ENCODE measurements at regions of chr1 and their contacts with region 1.

Region 1: GRCh38 chr1:204989266-204990058 is 53.5 kb upstream of the CNTN2 start:
- DNase-seq: peak; percentile 60 to 66
- ATAC-seq: peak; percentile 84 to 90 (median 86)
- H3K4me3 ChIP-seq: no peak overlapping the region
- H3K27ac ChIP-seq: no peak overlapping the region
- H3K4me1 ChIP-seq: peaks cover 0 to 6% (median 4%) of the 10 kb centered on the region in 9 donors
- H3K27me3 ChIP-seq: peaks cover 0 to 7% (median 5%) of the 10 kb centered on the region in 7 donors
- CTCF ChIP-seq: peak; percentile 75 to 95 (median 93)

Region 2: DNA sequence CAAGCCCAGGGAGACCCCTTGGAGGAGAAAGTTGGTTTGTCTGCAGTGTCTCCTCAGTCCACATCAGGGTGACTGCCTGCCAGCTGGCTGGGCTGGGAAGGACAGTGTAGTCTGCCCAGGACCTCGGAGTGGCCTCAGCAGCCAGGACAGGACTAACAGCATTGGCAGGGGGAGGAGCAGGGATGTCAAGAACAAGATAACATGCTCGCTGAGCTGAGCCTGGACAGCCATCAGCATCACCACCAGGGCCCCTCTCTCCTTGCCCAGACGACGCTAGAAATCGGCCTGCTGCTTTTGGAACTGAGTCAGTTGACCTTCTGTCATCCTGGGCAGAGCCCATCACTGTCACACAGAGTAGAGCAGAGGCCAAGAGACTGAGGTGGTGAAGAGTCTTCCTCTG is 30.1 kb before region 1 on chr1:
- intact Hi-C with region 1: no loop called
- DNase-seq: peak; percentile 38 to 68
- ATAC-seq: peak; percentile 76 to 96 (median 90)
- H3K4me3 ChIP-seq: no peak overlapping the region
- H3K27ac ChIP-seq: peak overlapping the region in 9 of 10 donors; percentile 37 to 84 (median 72)
- H3K4me1 ChIP-seq: peaks cover 0 to 37% (median 20%) of the 10 kb centered on the region in 9 donors
- H3K27me3 ChIP-seq: no peaks in the 10 kb centered on the region
- CTCF ChIP-seq: no peak

Region 3: GRCh38 chr1:205056188-205056611 is 66.7 kb after region 1 on chr1:
- intact Hi-C with region 1: loop called in 9 of 10 experiments (anchors 1 to 5 kb)
- DNase-seq: no peak
- ATAC-seq: no peak
- H3K4me3 ChIP-seq: no peak overlapping the region
- H3K27ac ChIP-seq: no peak overlapping the region
- H3K4me1 ChIP-seq: no peaks in the 10 kb centered on the region
- H3K27me3 ChIP-seq: peaks cover 0 to 23% (median 14%) of the 10 kb centered on the region in 7 donors
- CTCF ChIP-seq: no peak

Region 4: DNA sequence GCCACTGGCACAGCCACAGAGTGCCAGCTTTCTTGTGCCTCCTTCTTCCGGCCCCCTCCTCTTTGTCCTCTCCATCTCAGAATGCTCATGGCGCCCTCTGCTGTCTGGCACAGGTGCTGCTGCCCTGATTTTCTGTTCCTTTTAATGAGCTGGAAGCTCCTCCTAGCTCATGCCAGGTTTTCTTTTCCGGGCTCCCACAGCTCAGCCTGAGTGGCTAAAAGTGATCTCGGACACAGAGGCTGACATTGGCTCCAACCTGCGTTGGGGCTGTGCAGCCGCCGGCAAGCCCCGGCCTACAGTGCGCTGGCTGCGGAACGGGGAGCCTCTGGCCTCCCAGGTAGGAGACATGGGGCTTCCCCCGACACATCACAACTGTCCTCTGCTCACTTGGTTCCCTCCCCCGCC is 72.2 kb after region 1 on chr1:
- intact Hi-C with region 1: loop called (anchors 1 to 5 kb)
- DNase-seq: peak; percentile 70 to 74
- ATAC-seq: peak; percentile 55 to 81 (median 70)
- H3K4me3 ChIP-seq: no peak overlapping the region
- H3K27ac ChIP-seq: no peak overlapping the region
- H3K4me1 ChIP-seq: peaks cover 0 to 7% (median 4%) of the 10 kb centered on the region in 9 donors
- H3K27me3 ChIP-seq: no peaks in the 10 kb centered on the region
- CTCF ChIP-seq: peak; percentile 46 to 95 (median 88)